Common myeloid progenitor, CD34-positive (primary cell): ENCODE measurements at regions of chr2 and their contacts with region 1.

Region 1: DNA sequence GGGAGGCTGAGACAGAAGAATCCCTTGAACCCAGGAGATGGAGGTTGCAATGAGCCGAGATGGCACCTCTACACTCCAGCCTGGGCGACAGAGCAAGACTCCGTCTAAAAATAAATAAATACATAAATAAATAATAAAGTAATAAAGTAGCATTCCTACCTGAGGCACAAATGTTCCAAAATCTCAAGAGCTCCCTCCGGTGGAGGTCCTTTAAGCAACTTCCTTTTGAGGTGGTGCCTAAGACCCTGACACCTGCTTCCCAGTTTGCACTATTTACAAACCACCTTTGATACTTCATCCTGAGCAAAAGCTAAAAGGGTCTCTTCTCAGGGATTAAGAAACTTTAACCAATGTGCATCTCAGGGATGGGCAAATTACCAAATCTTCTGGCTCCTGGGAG is 505.1 kb downstream of the CNTNAP5 start:
- DNase-seq: peak in 2 of 3 donors; percentile 24 to 25
- H3K4me3 ChIP-seq: no peak overlapping the region
- H3K27ac ChIP-seq: no peak overlapping the region
- H3K4me1 ChIP-seq: no peaks in the 10 kb centered on the region
- H3K27me3 ChIP-seq: no peaks in the 10 kb centered on the region

Region 2: GRCh38 chr2:124027182-124027581 is 503.0 kb before region 1 on chr2:
- CTCF ChIA-PET with region 1: interaction called, 20 read pairs
- POLR2A ChIA-PET with region 1: no interaction called
- DNase-seq: peak; percentile 64 to 83 (median 79)
- H3K4me3 ChIP-seq: no peak overlapping the region
- H3K27ac ChIP-seq: no peak overlapping the region
- H3K4me1 ChIP-seq: peaks cover 0 to 15% (median 14%) of the 10 kb centered on the region in 4 experiments
- H3K27me3 ChIP-seq: peaks cover 11 to 38% (median 23%) of the 10 kb centered on the region in 5 experiments